ENCODE measurements at regions of chr3 and their contacts with region 1.

Region 1: GRCh38 chr3:32781210-32781968 is 36.4 kb upstream of the TRIM71 start:
- DNase-seq: peak; percentile 89
- CTCF ChIP-seq: peak; percentile 95

Region 2: DNA sequence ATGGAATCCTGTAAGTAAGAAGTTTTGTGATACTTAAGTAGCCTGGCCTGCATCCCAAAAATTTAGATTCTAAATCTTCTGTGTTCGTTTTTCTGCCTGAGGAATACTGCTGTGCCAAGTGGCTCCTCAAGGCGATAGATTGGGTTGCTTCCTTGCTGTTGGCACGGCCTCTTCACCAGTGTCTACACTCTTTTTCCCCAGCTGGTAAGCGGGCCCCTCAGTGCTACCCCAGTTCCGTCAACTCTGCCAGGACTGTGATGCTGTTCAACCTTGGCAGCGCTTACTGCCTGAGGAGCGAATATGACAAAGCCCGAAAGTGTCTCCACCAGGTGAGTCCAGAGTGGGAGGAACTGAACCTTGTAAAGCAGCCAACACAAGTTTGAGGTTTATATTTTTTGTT is 16.9 kb before region 1 on chr3:
- CTCF ChIA-PET with region 1: interaction called, 21 read pairs
- POLR2A ChIA-PET with region 1: no interaction called
- DNase-seq: no peak
- CTCF ChIP-seq: no peak

Region 3: GRCh38 chr3:33001889-33002288 is 220.5 kb after region 1 on chr3:
- CTCF ChIA-PET with region 1: no interaction called
- POLR2A ChIA-PET with region 1: no interaction called
- DNase-seq: peak; percentile 45
- CTCF ChIP-seq: no peak

Measured in GM10248 (cell line).